Ascending aorta (tissue), 2 donors: ENCODE measurements at regions of chr5 and their contacts with region 1.

Region 1: DNA sequence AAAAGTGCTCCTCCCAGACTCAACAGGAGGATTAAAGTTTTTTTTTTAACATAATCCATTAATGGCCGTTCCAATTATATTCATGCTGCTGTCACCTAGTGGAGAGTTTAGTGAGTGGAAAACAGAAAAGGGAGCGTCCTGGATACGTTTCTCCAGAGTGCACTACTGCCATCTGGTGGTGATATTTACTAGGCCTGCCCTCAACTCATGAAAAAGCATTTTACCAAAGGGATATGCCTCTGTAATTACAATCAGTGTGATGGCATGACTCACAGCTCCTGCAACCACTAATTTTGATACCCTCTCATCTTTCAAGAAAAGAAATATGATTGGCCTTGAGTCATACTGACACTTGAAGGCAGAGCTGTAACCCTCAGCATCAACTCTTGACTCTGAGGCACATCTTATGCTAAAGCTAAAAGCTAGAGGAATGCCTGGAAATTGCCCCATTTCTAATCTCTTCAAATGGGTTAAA is 20.0 kb downstream of the MINAR2 start:
- DNase-seq: peak in 1 of 2 donors; percentile 75
- H3K4me3 ChIP-seq: no peak overlapping the region
- H3K27ac ChIP-seq: no peak overlapping the region
- H3K4me1 ChIP-seq: no peaks in the 10 kb centered on the region
- H3K27me3 ChIP-seq: no peaks in the 10 kb centered on the region
- CTCF ChIP-seq: peak; percentile 68 to 93 (median 85)

Region 2: DNA sequence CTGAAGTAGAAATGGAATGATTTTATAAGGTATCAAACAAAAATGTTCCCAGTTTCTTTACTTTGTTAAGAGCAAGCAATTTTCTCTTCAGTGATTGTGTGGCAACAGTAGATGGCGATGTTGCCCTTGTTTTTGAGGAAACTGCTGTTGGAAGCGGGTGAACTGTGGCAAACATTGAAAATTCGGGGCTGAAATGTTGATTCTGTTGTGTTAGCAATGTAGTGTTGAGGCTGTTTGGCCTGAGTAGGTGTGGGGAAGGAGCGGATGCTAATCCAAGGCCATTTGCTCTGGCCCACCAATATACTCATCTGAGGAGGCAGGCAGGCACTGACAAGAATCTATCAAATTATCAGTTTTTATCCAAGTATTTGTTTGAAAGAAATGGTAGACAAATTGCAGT is 1554.6 kb before region 1 on chr5:
- intact Hi-C with region 1: loop called (anchors 5 kb)
- DNase-seq: no peak
- H3K4me3 ChIP-seq: no peak overlapping the region
- H3K27ac ChIP-seq: no peak overlapping the region
- H3K4me1 ChIP-seq: no peaks in the 10 kb centered on the region
- H3K27me3 ChIP-seq: no peaks in the 10 kb centered on the region
- CTCF ChIP-seq: peak in 2 of 3 experiments; percentile 31 to 59

Region 3: GRCh38 chr5:128905571-128906110 is 862.3 kb before region 1 on chr5:
- intact Hi-C with region 1: loop called (anchors 5 kb)
- DNase-seq: no peak
- H3K4me3 ChIP-seq: no peak overlapping the region
- H3K27ac ChIP-seq: no peak overlapping the region
- H3K4me1 ChIP-seq: no peaks in the 10 kb centered on the region
- H3K27me3 ChIP-seq: no peaks in the 10 kb centered on the region
- CTCF ChIP-seq: peak; percentile 44 to 77 (median 52)

Region 4: DNA sequence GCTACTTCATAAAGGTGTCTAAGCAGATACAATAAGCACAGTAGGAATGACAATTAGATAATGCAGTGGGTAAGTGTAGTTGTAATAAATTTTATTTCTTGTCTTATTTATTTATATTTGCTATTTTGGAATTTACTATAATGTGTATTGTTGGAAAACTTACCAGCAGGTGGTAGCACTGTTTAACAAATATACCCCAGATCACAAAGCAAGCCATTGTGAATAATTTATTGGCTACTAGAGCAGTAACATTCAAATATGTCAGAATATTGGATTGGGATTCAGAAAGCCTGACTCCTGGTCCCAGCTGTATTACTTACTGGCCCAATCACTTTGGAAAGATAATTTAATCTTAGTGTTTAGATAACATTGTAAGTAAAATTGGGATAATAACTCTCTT is 595.4 kb before region 1 on chr5:
- intact Hi-C with region 1: loop called (anchors 5 kb)
- DNase-seq: no peak
- H3K4me3 ChIP-seq: no peak overlapping the region
- H3K27ac ChIP-seq: no peak overlapping the region
- H3K4me1 ChIP-seq: no peaks in the 10 kb centered on the region
- H3K27me3 ChIP-seq: no peaks in the 10 kb centered on the region
- CTCF ChIP-seq: peak in 1 of 3 experiments; percentile 16

Region 5: GRCh38 chr5:129664337-129664937 is 103.5 kb before region 1 on chr5:
- intact Hi-C with region 1: loop called (anchors 5 kb)
- DNase-seq: peak in 1 of 2 donors; percentile 62
- H3K4me3 ChIP-seq: no peak overlapping the region
- H3K27ac ChIP-seq: no peak overlapping the region
- H3K4me1 ChIP-seq: no peaks in the 10 kb centered on the region
- H3K27me3 ChIP-seq: no peaks in the 10 kb centered on the region
- CTCF ChIP-seq: peak in 2 of 3 experiments; percentile 58 to 63

Region 6: DNA sequence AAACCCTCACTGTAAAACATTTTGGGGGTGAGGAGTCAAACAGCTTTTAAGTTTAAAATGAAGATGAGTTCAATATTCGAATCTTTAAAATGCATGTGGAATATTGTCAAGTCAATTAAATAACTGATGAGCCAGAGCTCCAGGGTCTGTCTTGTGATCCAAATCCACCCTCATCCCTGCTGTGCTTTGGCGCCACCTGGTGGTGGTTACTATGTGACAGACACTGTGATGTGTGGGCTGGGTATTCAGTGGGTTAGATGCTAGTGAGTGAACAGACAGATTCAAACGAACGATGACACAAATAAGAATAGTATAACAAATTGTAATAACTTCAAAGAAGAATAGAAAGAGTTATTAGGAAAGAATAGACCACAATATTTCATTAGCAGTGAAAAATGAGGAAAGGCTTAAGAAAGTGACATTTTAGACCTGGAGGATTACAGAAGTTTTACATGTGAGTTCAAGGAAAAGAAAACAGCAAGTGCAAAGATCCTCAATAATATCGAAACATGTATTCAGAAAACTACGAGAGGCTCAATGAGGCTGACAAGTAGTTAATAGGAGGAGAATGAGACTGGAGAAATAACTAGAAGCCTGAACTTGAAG is 84.9 kb after region 1 on chr5:
- intact Hi-C with region 1: loop called (anchors 1 kb)
- DNase-seq: peak; percentile 8 to 83
- H3K4me3 ChIP-seq: no peak overlapping the region
- H3K27ac ChIP-seq: no peak overlapping the region
- H3K4me1 ChIP-seq: no peaks in the 10 kb centered on the region
- H3K27me3 ChIP-seq: no peaks in the 10 kb centered on the region
- CTCF ChIP-seq: peak; percentile 30 to 78 (median 73)

Region 7: DNA sequence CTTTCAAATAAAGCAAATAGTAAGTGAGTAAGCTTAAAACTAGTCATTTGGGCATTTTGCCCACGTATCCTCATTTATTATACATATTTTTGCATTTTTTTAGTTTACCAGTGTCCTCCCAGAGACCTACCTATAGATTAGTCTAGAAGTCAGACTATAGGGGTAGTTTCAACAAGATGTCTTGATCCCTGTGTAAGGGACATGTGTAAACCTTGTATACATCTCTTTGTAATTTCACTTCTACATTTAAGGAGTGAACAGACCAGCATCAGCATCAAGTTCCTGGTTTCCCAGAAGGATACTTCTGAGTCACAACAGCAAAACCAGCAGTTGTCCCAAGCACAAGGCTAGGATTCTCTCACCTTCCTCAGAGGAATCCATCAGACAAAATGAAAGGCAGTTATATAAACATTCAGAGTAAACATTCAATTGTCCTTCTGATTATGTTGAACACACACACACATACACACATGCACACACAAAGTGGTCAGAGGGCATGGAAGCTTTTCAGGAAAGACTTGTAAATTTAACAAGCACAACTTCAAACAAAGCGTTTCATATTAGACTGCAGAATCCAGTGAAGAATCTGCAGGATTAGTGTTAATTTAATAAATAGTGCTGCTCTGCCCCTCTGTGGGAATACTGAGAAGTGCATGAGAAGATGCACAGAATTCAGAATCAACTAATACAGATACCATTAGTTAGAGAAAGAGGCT is 1341.8 kb after region 1 on chr5:
- intact Hi-C with region 1: loop called (anchors 2 kb)
- DNase-seq: no peak
- H3K4me3 ChIP-seq: no peak overlapping the region
- H3K27ac ChIP-seq: no peak overlapping the region
- H3K4me1 ChIP-seq: no peaks in the 10 kb centered on the region
- H3K27me3 ChIP-seq: no peaks in the 10 kb centered on the region
- CTCF ChIP-seq: peak; percentile 41 to 67 (median 57)